ENCODE measurements at regions of chr5 and their contacts with region 1.

Region 1: GRCh38 chr5:172881691-172882370 is 47.8 kb downstream of the ERGIC1 start:
- DNase-seq: no peak
- H3K4me3 ChIP-seq: no peak overlapping the region
- H3K27ac ChIP-seq: peak overlapping the region; percentile 31
- H3K27me3 ChIP-seq: no peaks in the 10 kb centered on the region
- CTCF ChIP-seq: no peak

Region 2: GRCh38 chr5:172749881-172750633 is 131.8 kb before region 1 on chr5:
- CTCF ChIA-PET with region 1: interaction called, 10 read pairs
- POLR2A ChIA-PET with region 1: no interaction called
- DNase-seq: no peak
- H3K4me3 ChIP-seq: no peak overlapping the region
- H3K27ac ChIP-seq: no peak overlapping the region
- H3K27me3 ChIP-seq: no peaks in the 10 kb centered on the region
- CTCF ChIP-seq: no peak

Region 3: GRCh38 chr5:172806897-172807672 is 74.7 kb before region 1 on chr5:
- CTCF ChIA-PET with region 1: no interaction called
- POLR2A ChIA-PET with region 1: no interaction called
- DNase-seq: peak; percentile 53
- H3K4me3 ChIP-seq: no peak overlapping the region
- H3K27ac ChIP-seq: peak overlapping the region; percentile 78
- H3K27me3 ChIP-seq: no peaks in the 10 kb centered on the region
- CTCF ChIP-seq: no peak

Region 4: DNA sequence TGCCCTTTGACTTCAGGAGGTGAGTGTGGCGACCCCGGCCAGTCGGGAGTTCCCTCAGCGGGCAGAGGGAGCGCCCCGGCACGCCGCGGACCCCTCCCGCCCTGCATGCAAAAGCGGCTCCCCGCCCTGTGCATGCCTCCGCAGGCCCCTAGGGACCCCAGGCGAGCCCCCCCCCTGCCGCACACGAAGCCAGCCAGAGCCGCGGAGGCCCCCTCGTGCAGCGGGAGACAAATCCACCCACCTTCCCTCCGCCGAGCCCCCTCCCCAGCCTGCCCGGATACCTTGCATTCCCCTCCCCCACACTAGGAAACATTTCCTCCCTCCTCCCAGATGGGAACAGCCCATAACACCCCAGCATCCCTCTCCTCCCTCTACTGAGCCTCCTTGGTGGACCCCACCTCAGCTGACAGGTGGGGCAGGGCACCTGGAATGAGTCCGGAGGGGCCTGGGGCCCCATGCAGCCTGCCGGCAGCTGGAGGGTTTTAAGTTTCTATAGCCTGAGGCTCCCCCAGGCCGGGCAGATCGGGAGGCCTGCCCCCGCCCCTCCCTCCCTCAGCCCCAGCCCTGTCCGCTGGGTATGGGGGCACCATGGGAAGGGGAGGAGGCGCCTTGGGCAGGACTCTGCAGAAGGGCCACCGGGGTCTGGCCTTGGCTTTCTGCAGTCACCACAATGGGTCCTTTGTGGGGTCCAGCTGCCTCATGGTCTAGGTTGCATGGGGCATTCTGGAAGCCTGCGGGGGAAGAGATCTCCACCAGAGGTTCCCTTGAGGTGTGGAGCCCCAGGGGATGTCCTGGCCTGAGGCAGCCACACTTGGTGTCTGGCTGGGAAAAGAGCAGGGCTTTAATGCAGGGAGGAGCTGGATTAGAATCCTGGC is 47.2 kb before region 1 on chr5:
- CTCF ChIA-PET with region 1: no interaction called
- POLR2A ChIA-PET with region 1: interaction called, 10 read pairs
- DNase-seq: no peak
- H3K4me3 ChIP-seq: peak overlapping the region; percentile 84
- H3K27ac ChIP-seq: peak overlapping the region; percentile 11
- H3K27me3 ChIP-seq: no peaks in the 10 kb centered on the region
- CTCF ChIP-seq: no peak